CD8-positive, alpha-beta T cell (primary cell): ENCODE measurements at regions of chr6 and their contacts with region 1.

Region 1: GRCh38 chr6:30489081-30490025 is at the start of gene HLA-E:
- DNase-seq: peak; percentile 75 to 100 (median 87)
- ATAC-seq: peak; percentile 80
- H3K4me3 ChIP-seq: peak within 1 kb of the TSS; percentile 93 to 99
- H3K4me3 Mint-ChIP-seq: peak within 1 kb of the TSS; percentile 99
- H3K27ac ChIP-seq: peak within 1 kb of the TSS; percentile 94 to 96
- H3K27ac Mint-ChIP-seq: peak within 1 kb of the TSS; percentile 98
- H3K4me1 ChIP-seq: peaks cover 31% of the 10 kb centered on the region
- H3K4me1 Mint-ChIP-seq: peaks cover 52% of the 10 kb centered on the region
- H3K27me3 ChIP-seq: no peaks in the 10 kb centered on the region
- H3K27me3 Mint-ChIP-seq: no peaks in the 10 kb centered on the region
- CTCF ChIP-seq: no peak
- total RNA-seq, gene HLA-E: 1,266 to 1,281 TPM

Region 2: DNA sequence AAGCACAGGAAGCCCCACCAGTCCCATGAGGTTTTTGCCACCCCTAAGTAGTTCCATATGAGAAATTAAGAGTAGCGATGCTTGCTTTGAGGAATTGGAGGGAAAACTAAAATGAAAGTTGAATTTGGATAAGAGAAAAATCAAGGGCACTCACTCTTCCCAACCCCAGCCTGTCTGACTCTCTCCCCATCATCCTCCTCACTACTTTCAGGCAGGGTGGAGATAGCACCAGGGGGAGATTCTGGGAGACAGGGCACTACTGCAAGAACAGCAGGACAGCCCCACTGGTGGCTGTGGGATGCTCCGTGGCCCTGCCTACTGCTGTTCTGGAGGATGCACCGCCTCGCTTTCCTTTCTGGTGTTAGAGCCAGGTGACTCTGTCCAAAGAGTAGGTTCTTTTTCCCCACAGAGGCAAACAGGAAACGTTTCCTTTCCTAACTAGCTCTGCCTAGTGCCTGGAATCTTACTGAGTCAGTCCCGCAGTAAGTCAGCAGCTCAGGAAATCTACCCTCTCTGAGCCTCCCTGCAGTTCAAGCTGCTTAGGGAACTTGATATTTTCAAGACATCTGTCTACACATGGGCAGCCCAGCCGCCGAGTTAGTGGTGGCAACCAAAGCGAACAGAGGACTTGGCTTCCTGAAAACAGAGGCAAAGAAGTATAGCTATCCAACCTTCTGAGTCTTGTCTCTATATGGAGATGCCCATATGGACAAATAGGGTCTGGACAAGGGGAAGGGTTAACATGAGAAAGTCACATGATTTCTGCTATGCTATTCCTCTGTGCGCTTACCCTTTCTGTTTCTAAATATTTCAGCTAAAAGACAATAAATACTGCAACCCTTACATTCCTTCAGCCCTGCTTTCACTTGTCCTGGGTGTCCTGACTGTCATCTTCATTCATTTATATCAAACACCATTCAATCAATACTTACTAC is 11.3 kb after region 1 on chr6:
- CTCF ChIA-PET with region 1: interaction called, 18 read pairs
- POLR2A ChIA-PET with region 1: interaction called, 107 read pairs
- intact Hi-C with region 1: no loop called
- DNase-seq: peak in 1 of 9 experiments; percentile 30
- ATAC-seq: peak; percentile 55
- H3K4me3 ChIP-seq: peak overlapping the region; percentile 14 to 38
- H3K4me3 Mint-ChIP-seq: peak overlapping the region; percentile 80
- H3K27ac ChIP-seq: no peak overlapping the region
- H3K27ac Mint-ChIP-seq: peak overlapping the region; percentile 83
- H3K4me1 ChIP-seq: peaks cover 38% of the 10 kb centered on the region
- H3K4me1 Mint-ChIP-seq: peaks cover 42% of the 10 kb centered on the region
- H3K27me3 ChIP-seq: no peaks in the 10 kb centered on the region
- H3K27me3 Mint-ChIP-seq: no peaks in the 10 kb centered on the region
- CTCF ChIP-seq: no peak

Region 3: DNA sequence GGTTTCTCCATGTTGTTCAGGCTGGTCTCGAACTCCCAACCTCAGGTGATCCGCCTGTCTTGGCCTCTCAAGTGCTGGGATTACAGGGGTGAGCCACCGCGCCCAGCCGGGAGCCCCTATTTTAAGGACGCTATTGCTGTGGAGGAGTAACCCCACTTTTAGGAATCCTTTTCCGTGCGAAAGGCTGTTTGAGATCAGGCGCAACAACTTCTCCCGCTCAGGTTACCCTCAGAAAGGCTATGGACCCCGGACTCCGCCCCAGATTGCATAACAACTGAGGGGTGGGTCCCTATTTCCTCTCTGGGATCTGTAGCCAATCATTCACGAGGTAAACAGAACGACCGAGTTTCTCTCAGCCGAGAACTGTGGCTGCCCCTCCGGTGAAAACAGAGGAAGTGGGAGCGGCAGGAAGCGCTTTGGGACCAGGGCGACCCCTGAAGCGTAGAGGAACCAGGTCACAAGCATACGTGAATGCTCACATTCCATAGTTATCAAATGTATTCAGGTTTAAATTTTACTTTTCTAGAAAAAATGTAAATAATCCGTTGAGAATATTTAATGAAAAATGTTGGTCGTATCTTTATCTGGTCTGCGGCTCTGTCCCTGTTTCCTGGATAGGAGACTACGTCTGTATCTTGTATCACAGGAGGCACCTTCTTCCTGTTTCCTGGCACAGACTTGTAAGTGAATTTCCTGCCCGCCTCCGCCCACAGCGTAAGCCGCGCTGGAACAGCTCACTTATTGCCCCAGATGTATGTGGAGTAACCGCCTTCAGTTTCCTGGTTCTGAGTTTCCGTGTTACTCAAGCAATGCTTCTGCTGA is 26.8 kb after region 1 on chr6:
- CTCF ChIA-PET with region 1: interaction called, 47 read pairs
- POLR2A ChIA-PET with region 1: interaction called, 359 read pairs
- intact Hi-C with region 1: loop called (anchors 1 kb)
- DNase-seq: peak; percentile 77 to 98 (median 90)
- ATAC-seq: peak; percentile 83
- H3K4me3 ChIP-seq: peak overlapping the region; percentile 36 to 43
- H3K4me3 Mint-ChIP-seq: peak overlapping the region; percentile 83
- H3K27ac ChIP-seq: peak overlapping the region; percentile 82 to 99
- H3K27ac Mint-ChIP-seq: peak overlapping the region; percentile 99
- H3K4me1 ChIP-seq: peaks cover 61% of the 10 kb centered on the region
- H3K4me1 Mint-ChIP-seq: peaks cover 63% of the 10 kb centered on the region
- H3K27me3 ChIP-seq: no peaks in the 10 kb centered on the region
- H3K27me3 Mint-ChIP-seq: no peaks in the 10 kb centered on the region
- CTCF ChIP-seq: no peak

Region 4: GRCh38 chr6:30556066-30556905 is 66.9 kb after region 1 on chr6 and contains the start of gene GNL1:
- CTCF ChIA-PET with region 1: interaction called, 6 read pairs
- POLR2A ChIA-PET with region 1: interaction called, 16 read pairs
- intact Hi-C with region 1: loop called (anchors 1 kb)
- DNase-seq: peak; percentile 97 to 100 (median 99)
- ATAC-seq: peak; percentile 90
- H3K4me3 ChIP-seq: peak within 1 kb of the TSS; percentile 75 to 92
- H3K4me3 Mint-ChIP-seq: peak within 1 kb of the TSS; percentile 95
- H3K27ac ChIP-seq: peak within 1 kb of the TSS; percentile 98 to 99
- H3K27ac Mint-ChIP-seq: peak within 1 kb of the TSS; percentile 99
- H3K4me1 ChIP-seq: peaks cover 25% of the 10 kb centered on the region
- H3K4me1 Mint-ChIP-seq: peaks cover 42% of the 10 kb centered on the region
- H3K27me3 ChIP-seq: no peaks in the 10 kb centered on the region
- H3K27me3 Mint-ChIP-seq: no peaks in the 10 kb centered on the region
- CTCF ChIP-seq: no peak
- total RNA-seq, gene GNL1: 148 to 159 TPM

Region 5: DNA sequence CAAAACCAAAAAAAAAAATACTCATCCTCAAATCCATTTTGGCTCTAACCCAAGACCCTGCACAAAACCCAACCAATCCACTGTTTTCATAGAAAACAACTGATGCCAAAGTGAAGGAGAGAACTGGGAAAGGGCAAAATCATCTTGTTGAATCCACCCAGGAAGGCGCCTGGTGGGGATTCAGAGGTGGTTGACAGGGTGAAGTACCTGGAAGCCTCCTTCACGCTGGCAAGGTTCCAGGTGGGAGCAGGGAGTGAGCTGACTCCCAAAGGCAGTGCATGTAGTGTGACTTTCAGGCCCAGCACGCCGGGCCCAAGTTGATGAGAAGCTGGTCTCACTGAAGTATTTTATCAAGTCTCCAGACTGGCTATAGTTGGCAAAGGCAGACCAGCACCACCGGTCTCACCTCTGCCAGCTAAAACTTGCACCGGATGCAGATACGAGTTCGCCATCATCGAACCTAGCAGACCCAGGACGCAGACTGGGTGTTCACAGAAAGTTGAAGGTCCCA is 111.2 kb after region 1 on chr6:
- CTCF ChIA-PET with region 1: interaction called, 189 read pairs
- POLR2A ChIA-PET with region 1: interaction called, 16 read pairs
- intact Hi-C with region 1: no loop called
- DNase-seq: no peak
- ATAC-seq: no peak
- H3K4me3 ChIP-seq: no peak overlapping the region
- H3K4me3 Mint-ChIP-seq: no peak overlapping the region
- H3K27ac ChIP-seq: peak overlapping the region in 1 of 2 experiments; percentile 67
- H3K27ac Mint-ChIP-seq: no peak overlapping the region
- H3K4me1 ChIP-seq: peaks cover 15% of the 10 kb centered on the region
- H3K4me1 Mint-ChIP-seq: peaks cover 22% of the 10 kb centered on the region
- H3K27me3 ChIP-seq: no peaks in the 10 kb centered on the region
- H3K27me3 Mint-ChIP-seq: no peaks in the 10 kb centered on the region
- CTCF ChIP-seq: no peak

Region 6: GRCh38 chr6:30678964-30679726 is 189.8 kb after region 1 on chr6:
- CTCF ChIA-PET with region 1: interaction called, 3 read pairs
- POLR2A ChIA-PET with region 1: interaction called, 3 read pairs
- intact Hi-C with region 1: loop called in 1 of 2 experiments (anchors 2 kb)
- DNase-seq: peak; percentile 88 to 98 (median 92)
- ATAC-seq: peak; percentile 32
- H3K4me3 ChIP-seq: peak overlapping the region; percentile 86 to 95
- H3K4me3 Mint-ChIP-seq: peak overlapping the region; percentile 99
- H3K27ac ChIP-seq: peak overlapping the region; percentile 21 to 85
- H3K27ac Mint-ChIP-seq: peak overlapping the region; percentile 99
- H3K4me1 ChIP-seq: peaks cover 27% of the 10 kb centered on the region
- H3K4me1 Mint-ChIP-seq: peaks cover 38% of the 10 kb centered on the region
- H3K27me3 ChIP-seq: no peaks in the 10 kb centered on the region
- H3K27me3 Mint-ChIP-seq: no peaks in the 10 kb centered on the region
- CTCF ChIP-seq: peak; percentile 92